CD14-positive monocyte (primary cell): ENCODE measurements at regions of chr3 and their contacts with region 1.

Region 1: DNA sequence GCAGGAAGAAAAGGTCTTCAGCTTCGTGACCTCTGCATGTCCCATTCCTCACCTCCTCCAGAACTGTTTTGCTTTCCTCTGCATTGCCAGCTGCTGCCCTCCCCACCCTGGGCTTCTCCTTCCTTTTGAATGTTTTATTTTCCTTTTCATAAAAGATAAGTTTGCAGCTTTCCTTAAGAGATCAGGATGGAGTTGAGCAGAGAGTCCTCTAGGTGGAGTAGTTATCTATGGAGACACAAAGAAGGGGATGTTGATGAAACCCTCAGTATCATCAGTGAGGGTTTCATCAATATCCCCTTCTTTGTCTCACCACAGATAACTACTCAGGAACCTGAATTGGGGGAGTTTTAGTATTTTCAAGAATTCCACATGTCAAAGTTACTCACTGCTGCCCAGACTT is 19.0 kb upstream of the SLC25A36 start:
- DNase-seq: no peak
- H3K4me3 ChIP-seq: no peak overlapping the region
- H3K4me3 Mint-ChIP-seq: no peak overlapping the region
- H3K27ac ChIP-seq: no peak overlapping the region
- H3K27ac Mint-ChIP-seq: no peak overlapping the region
- H3K4me1 ChIP-seq: no peaks in the 10 kb centered on the region
- H3K4me1 Mint-ChIP-seq: no peaks in the 10 kb centered on the region
- H3K27me3 ChIP-seq: no peaks in the 10 kb centered on the region
- H3K27me3 Mint-ChIP-seq: peaks cover 0 to 3% (median 2%) of the 10 kb centered on the region in 3 donors
- CTCF ChIP-seq: peak; percentile 48

Region 2: DNA sequence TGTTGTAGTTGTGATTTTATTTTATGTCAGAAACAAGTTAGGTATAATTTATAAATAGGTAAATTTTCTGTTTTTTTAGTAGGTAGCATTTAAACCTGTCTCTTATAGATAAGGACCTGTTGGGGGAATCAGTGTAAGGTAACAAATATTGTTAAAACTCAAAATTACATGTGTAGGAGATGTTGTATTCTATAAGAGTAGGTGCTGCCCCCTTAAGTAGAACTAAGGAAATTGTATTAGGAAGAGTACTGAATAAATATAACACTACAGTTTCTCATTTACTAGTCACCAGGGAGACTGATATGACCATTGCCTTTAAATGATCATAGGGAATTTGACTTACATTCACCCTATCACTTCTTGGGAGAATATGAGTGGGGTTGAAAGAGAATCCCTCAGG is 50.2 kb after region 1 on chr3:
- intact Hi-C with region 1: loop called in 1 of 2 experiments (anchors 10 kb)
- DNase-seq: no peak
- H3K4me3 ChIP-seq: no peak overlapping the region
- H3K4me3 Mint-ChIP-seq: no peak overlapping the region
- H3K27ac ChIP-seq: no peak overlapping the region
- H3K27ac Mint-ChIP-seq: no peak overlapping the region
- H3K4me1 ChIP-seq: no peaks in the 10 kb centered on the region
- H3K4me1 Mint-ChIP-seq: no peaks in the 10 kb centered on the region
- H3K27me3 ChIP-seq: no peaks in the 10 kb centered on the region
- H3K27me3 Mint-ChIP-seq: no peaks in the 10 kb centered on the region
- CTCF ChIP-seq: peak; percentile 37